ENCODE measurements at regions of chr1 and their contacts with region 1.

Region 1: GRCh38 chr1:54421101-54421504 is 14.9 kb upstream of the SSBP3 start:
- DNase-seq: no peak
- ATAC-seq: no peak

Region 2: GRCh38 chr1:54287176-54287650 is 133.9 kb before region 1 on chr1:
- intact Hi-C with region 1: no loop called
- DNase-seq: peak; percentile 79
- ATAC-seq: peak; percentile 66

Region 3: GRCh38 chr1:54355931-54356679 is 65.0 kb before region 1 on chr1:
- intact Hi-C with region 1: no loop called
- DNase-seq: no peak
- ATAC-seq: no peak

Region 4: DNA sequence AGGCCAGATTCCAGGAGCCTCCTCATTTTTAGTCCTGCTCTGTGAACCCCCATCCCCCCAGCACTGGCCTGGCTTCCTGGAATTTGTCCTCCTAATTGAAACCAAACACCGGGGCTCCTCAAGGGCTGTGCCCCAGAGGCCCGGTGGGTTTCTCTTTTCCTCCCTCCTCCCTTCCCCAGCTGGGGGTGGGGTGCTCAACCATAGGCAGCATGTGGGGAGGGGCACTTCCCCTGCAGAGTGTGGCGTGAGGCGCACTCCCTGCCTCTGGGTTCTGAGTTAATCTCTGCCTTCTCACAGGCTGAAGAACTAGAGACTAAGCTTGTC is 59.4 kb after region 1 on chr1:
- intact Hi-C with region 1: loop called (anchors 2 kb)
- DNase-seq: no peak
- ATAC-seq: no peak